ENCODE measurements at regions of chr10 and their contacts with region 1.

Region 1: DNA sequence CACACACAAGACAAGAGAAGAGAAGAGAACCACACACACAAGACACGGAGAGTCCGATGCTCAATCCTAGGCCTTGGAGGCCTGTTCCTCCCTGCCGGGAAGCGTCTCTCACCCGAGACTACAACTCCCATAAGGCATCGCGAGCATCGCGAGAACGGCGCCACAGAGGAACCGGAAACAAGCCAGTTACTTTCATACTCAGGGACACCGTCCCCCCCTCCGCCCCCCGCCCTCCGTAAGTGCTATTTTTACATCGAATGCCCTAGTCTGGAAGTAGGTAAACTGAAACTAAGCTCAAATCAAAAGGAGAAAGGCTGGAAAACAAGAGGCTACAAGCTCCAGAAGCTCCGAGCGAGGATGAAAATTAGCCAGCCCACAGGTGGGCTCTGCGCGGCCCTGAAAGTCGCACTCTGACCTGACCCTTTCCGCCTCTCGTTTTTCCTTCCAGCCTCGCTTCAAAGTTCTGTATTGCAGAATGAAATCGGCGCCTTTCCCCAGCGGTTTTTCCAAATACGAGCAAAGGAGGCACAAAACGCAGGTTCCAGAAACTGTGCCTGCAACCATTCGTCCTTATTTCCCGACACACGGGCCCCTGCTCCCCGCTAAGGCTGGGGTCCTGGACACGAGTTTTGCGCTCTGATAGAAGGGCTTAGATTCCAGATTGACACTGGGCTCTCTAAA is 11.5 kb upstream of the DNAJC12 start:
- DNase-seq: peak; percentile 99
- ATAC-seq: peak; percentile 95
- H3K4me3 ChIP-seq: peak overlapping the region; percentile 73
- H3K27ac ChIP-seq: peak overlapping the region; percentile 90
- H3K4me1 ChIP-seq: peaks cover 6% of the 10 kb centered on the region
- H3K27me3 ChIP-seq: no peaks in the 10 kb centered on the region
- CTCF ChIP-seq: no peak

Region 2: DNA sequence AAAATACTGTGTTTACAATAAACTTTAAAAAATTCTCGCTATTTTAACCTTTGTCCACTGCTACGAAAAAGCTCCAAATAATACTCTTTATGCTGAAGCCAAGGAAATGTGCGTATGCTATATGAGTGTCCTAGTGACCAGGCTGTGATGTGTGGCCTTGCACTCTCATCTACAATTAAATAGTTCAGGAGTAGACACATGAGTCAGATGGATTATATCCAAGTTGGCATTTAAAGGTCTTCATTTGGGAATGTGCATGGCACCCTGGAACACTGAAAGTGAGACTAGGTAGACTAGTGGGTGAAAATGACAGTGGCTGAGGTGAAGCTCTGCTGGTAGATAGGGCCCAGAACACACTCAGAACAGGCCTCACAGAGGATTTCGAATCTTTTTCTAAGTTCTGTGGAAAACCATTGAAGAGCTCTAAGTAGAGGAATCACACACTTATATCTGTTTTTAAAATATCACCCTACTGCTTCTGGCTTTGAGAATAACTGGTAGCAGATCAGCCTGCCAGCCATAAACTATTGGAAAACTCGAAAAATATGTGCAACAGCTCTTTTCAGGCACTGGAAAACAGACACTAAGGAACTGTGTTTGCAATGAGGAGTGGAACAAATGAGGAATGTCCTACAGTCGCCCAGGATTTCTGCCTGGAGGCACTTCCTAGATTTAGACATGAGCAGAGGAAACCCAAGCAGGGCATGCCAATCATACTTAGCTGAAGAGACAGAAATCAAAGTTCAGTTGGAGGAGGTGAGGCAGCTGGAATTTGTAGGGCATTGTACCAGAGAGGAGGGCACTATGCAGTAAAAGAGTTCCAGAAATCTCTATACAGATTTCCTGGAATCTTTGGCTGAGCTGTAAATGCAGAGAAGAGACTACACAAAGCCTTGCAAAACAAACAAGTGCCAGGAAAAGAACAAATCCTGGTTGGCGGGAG is 1527.5 kb before region 1 on chr10:
- CTCF ChIA-PET with region 1: no interaction called
- POLR2A ChIA-PET with region 1: interaction called, 16 read pairs
- intact Hi-C with region 1: no loop called
- DNase-seq: peak; percentile 81
- ATAC-seq: peak; percentile 51
- H3K4me3 ChIP-seq: no peak overlapping the region
- H3K27ac ChIP-seq: no peak overlapping the region
- H3K4me1 ChIP-seq: peaks cover 20% of the 10 kb centered on the region
- H3K27me3 ChIP-seq: no peaks in the 10 kb centered on the region
- CTCF ChIP-seq: no peak

Region 3: GRCh38 chr10:67802767-67803538 is 46.5 kb before region 1 on chr10:
- CTCF ChIA-PET with region 1: no interaction called
- POLR2A ChIA-PET with region 1: no interaction called
- intact Hi-C with region 1: no loop called
- DNase-seq: no peak
- ATAC-seq: peak; percentile 27
- H3K4me3 ChIP-seq: no peak overlapping the region
- H3K27ac ChIP-seq: no peak overlapping the region
- H3K4me1 ChIP-seq: no peaks in the 10 kb centered on the region
- H3K27me3 ChIP-seq: no peaks in the 10 kb centered on the region
- CTCF ChIP-seq: no peak

Region 4: DNA sequence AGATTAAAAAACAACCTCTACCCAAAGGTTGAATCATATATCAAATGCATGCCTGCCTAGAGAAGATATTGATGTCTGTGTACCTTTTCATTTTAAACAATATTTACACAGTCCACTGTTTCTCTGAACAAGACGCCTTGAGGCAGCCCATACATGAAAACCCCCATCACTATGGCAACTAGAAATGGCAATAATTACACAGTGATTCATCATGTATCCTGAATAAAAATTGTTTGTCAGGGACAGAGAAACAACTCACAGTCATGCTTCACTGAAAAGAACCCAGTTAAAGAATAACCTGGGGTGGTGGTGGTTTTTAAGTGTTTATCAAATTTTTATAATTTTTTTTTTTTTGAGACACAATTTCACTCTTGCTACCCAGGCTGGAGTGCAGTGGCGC is 31.2 kb before region 1 on chr10:
- CTCF ChIA-PET with region 1: interaction called, 5 read pairs
- POLR2A ChIA-PET with region 1: interaction called, 6 read pairs
- intact Hi-C with region 1: loop called (anchors 1 kb)
- DNase-seq: peak; percentile 100
- ATAC-seq: peak; percentile 75
- H3K4me3 ChIP-seq: peak overlapping the region; percentile 19; the same call in 1 of the 2 replicates
- H3K27ac ChIP-seq: peak overlapping the region; percentile 91
- H3K4me1 ChIP-seq: peaks cover 70% of the 10 kb centered on the region
- H3K27me3 ChIP-seq: no peaks in the 10 kb centered on the region
- CTCF ChIP-seq: no peak

Region 5: GRCh38 chr10:68010426-68010940 is 161.0 kb after region 1 on chr10:
- CTCF ChIA-PET with region 1: interaction called, 10 read pairs
- POLR2A ChIA-PET with region 1: no interaction called
- intact Hi-C with region 1: no loop called
- DNase-seq: no peak
- ATAC-seq: no peak
- H3K4me3 ChIP-seq: no peak overlapping the region
- H3K27ac ChIP-seq: no peak overlapping the region
- H3K4me1 ChIP-seq: no peaks in the 10 kb centered on the region
- H3K27me3 ChIP-seq: no peaks in the 10 kb centered on the region
- CTCF ChIP-seq: no peak

Region 6: GRCh38 chr10:68082872-68083271 is 233.4 kb after region 1 on chr10:
- CTCF ChIA-PET with region 1: no interaction called
- POLR2A ChIA-PET with region 1: no interaction called
- intact Hi-C with region 1: loop called (anchors 2 kb)
- DNase-seq: peak; percentile 89
- ATAC-seq: peak; percentile 14; the same call in 1 of the 2 replicates
- H3K4me3 ChIP-seq: no peak overlapping the region
- H3K27ac ChIP-seq: peak overlapping the region; percentile 57
- H3K4me1 ChIP-seq: peaks cover 63% of the 10 kb centered on the region
- H3K27me3 ChIP-seq: no peaks in the 10 kb centered on the region
- CTCF ChIP-seq: peak; percentile 98

Measured in PC-3 (cell line).